Esophagus muscularis mucosa (tissue), 4 donors: ENCODE measurements at regions of chr13 and their contacts with region 1.

Region 1: GRCh38 chr13:113816946-113817859 is 46.7 kb downstream of the GAS6 start:
- DNase-seq: peak; percentile 97
- H3K4me3 ChIP-seq: no peak overlapping the region
- H3K27ac ChIP-seq: peak overlapping the region; percentile 87 to 91 (median 88)
- H3K4me1 ChIP-seq: peaks cover 65 to 83% (median 78%) of the 10 kb centered on the region in 4 donors
- H3K27me3 ChIP-seq: no peaks in the 10 kb centered on the region
- CTCF ChIP-seq: peak; percentile 86 to 91 (median 89)
- EP300 ChIP-seq: no peak
- POLR2A ChIP-seq: no peak

Region 2: GRCh38 chr13:113863436-113864272 is 46.5 kb after region 1 on chr13 and contains the start of gene GAS6:
- intact Hi-C with region 1: loop called (anchors 2 kb)
- DNase-seq: no peak
- H3K4me3 ChIP-seq: peak within 1 kb of the TSS; percentile 84 to 94 (median 90)
- H3K27ac ChIP-seq: peak within 1 kb of the TSS; percentile 96 to 99 (median 98)
- H3K4me1 ChIP-seq: peaks cover 38 to 64% (median 51%) of the 10 kb centered on the region in 4 donors
- H3K27me3 ChIP-seq: no peaks in the 10 kb centered on the region
- CTCF ChIP-seq: peak in 2 of 3 experiments; percentile 22 to 23
- EP300 ChIP-seq: no peak
- POLR2A ChIP-seq: no peak
- total RNA-seq, gene GAS6: 241 to 459 (median 346) TPM

Region 3: GRCh38 chr13:113904411-113904810 is 87.2 kb after region 1 on chr13:
- intact Hi-C with region 1: loop called (anchors 2 kb)
- DNase-seq: peak; percentile 91
- H3K4me3 ChIP-seq: no peak overlapping the region
- H3K27ac ChIP-seq: peak overlapping the region; percentile 81 to 89 (median 87)
- H3K4me1 ChIP-seq: peaks cover 9 to 69% (median 64%) of the 10 kb centered on the region in 4 donors
- H3K27me3 ChIP-seq: no peaks in the 10 kb centered on the region
- CTCF ChIP-seq: peak; percentile 63 to 80 (median 77)
- EP300 ChIP-seq: no peak
- POLR2A ChIP-seq: no peak

Region 4: GRCh38 chr13:113951246-113951999 is 134.2 kb after region 1 on chr13:
- intact Hi-C with region 1: loop called (anchors 1 kb)
- DNase-seq: peak; percentile 96
- H3K4me3 ChIP-seq: peak overlapping the region; percentile 7 to 46 (median 36)
- H3K27ac ChIP-seq: peak overlapping the region in 2 of 4 donors; percentile 29 to 56
- H3K4me1 ChIP-seq: peaks cover 10 to 29% (median 24%) of the 10 kb centered on the region in 4 donors
- H3K27me3 ChIP-seq: no peaks in the 10 kb centered on the region
- CTCF ChIP-seq: peak; percentile 81 to 92 (median 92)
- EP300 ChIP-seq: no peak
- POLR2A ChIP-seq: no peak

Region 5: DNA sequence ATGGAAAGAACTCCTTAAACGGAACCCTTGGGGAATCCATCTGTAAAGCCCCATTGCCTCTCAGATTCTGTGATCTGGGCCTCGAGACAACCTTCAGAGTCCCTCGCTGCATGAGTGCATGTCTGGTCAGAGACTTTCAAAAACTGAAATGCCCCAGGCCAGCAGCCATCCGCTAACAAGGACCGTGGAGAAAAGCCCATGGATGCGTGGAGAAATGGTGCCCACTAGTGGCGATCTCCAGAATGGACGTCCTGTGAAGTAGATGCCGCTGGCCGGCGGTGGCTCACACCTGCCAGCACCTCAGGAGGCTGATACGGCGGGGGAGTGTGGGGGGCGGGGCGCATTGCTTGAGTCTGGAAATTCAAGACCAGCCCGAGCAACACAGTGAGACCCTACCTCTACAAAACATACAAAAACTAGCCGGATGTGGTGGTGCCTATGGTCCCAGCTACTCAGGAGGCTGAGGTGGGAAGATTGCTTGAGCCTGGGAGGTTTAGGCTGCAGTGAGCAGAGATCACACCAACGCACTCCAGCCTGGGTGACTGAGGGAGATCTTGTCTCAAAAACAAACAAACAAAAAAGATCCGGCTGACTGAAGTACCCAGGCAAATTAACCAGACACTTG is 409.6 kb after region 1 on chr13:
- intact Hi-C with region 1: loop called (anchors 5 kb)
- DNase-seq: peak; percentile 98
- H3K4me3 ChIP-seq: no peak overlapping the region
- H3K27ac ChIP-seq: no peak overlapping the region
- H3K4me1 ChIP-seq: peaks cover 5 to 17% (median 10%) of the 10 kb centered on the region in 4 donors
- H3K27me3 ChIP-seq: peaks cover 0 to 23% (median 3%) of the 10 kb centered on the region in 4 donors
- CTCF ChIP-seq: peak in 2 of 3 experiments; percentile 96 to 98
- EP300 ChIP-seq: no peak
- POLR2A ChIP-seq: no peak